Heart right ventricle (tissue), 16 donors: ENCODE measurements at regions of chr3 and their contacts with region 1.

Region 1: GRCh38 chr3:138915503-138916498 is 31.1 kb downstream of the FOXL2 start:
- DNase-seq: peak; percentile 92 to 96
- ATAC-seq: peak; percentile 96 to 99 (median 98)
- H3K4me3 ChIP-seq: peak overlapping the region; percentile 55 to 92 (median 81)
- H3K27ac ChIP-seq: peak overlapping the region; percentile 92 to 99 (median 96)
- H3K4me1 ChIP-seq: peaks cover 0 to 18% (median 7%) of the 10 kb centered on the region in 9 donors
- H3K27me3 ChIP-seq: no peaks in the 10 kb centered on the region
- CTCF ChIP-seq: peak; percentile 81 to 98 (median 88)

Region 2: GRCh38 chr3:137807998-137808397 is 1107.8 kb before region 1 on chr3:
- intact Hi-C with region 1: no loop called
- DNase-seq: no peak
- ATAC-seq: no peak
- H3K4me3 ChIP-seq: no peak overlapping the region
- H3K27ac ChIP-seq: no peak overlapping the region
- H3K4me1 ChIP-seq: no peaks in the 10 kb centered on the region
- H3K27me3 ChIP-seq: peaks cover 0 to 22% (median under 1%) of the 10 kb centered on the region in 7 donors
- CTCF ChIP-seq: no peak

Region 3: DNA sequence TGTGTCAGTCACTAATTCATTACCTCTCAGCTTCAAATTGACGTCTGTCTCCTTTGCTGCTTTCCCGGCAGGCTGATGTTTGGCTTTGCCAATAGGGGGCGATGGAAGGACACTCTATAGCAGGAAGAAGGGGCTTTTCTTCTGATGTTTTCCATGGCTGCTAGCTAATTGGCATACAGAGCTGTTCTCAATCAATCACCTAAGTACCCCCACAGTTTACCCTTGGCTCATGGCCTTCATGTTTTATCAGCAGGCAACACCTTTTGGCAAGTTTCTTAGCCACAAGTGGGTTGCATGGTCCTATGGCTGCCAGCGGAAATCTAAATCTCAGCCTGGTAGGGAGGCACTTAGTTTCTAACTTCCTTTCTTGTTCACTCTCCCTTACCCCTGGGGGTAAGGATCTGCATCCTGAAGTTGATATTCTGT is 436.4 kb before region 1 on chr3:
- intact Hi-C with region 1: loop called in 2 of 10 experiments (anchors 5 to 10 kb)
- DNase-seq: no peak
- ATAC-seq: peak in 3 of 8 donors; percentile 14 to 66 (median 58)
- H3K4me3 ChIP-seq: no peak overlapping the region
- H3K27ac ChIP-seq: no peak overlapping the region
- H3K4me1 ChIP-seq: peaks cover 0 to 11% (median 0%) of the 10 kb centered on the region in 9 donors
- H3K27me3 ChIP-seq: no peaks in the 10 kb centered on the region
- CTCF ChIP-seq: peak in 8 of 9 donors; percentile 16 to 67 (median 62)

Region 4: DNA sequence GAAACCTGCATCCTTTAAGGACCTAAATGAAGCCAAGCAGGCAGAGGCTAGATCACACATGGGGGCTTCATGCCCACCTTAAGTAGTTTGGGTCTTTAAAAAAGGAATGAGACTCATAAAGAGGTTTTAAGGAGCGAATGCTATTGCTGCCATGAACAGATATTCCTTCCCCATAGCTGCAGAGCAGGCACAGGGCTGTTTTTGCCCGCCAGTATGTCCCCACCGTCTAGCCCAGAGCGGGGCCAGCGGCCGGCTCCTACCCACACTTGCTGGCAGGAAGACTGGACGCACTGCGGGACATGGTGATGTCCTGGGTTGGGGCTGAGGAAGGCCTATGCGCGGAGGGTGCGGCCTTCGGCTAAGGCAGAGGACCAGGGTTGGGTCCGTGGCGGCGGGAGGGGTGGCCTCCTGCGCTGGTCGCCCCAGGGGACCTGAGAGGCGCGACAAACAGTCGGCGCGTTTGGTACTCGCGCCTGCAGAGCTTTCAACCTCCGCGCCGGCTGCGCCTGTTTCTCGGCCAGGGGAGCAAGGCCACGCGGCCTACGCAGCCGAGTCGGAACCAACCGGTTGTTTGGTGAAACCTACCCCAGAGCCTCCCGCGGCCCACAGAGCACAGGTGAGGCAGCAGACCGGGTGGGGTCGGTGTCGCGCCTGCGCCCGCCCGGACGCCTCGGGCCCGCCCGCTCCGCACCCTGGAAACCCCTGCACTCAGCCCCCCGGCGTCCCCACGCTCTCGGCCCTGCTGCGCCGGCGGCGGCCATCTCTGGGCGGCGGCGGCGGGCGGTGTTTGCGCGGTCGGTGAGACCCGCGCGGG is 307.3 kb before region 1 on chr3 and contains the start of gene FAIM:
- intact Hi-C with region 1: loop called in 3 of 10 experiments (anchors 5 kb)
- DNase-seq: peak; percentile 59 to 75
- ATAC-seq: peak; percentile 82 to 93 (median 86)
- H3K4me3 ChIP-seq: peak within 1 kb of the TSS; percentile 33 to 95 (median 78)
- H3K27ac ChIP-seq: peak within 1 kb of the TSS; percentile 86 to 99 (median 96)
- H3K4me1 ChIP-seq: peaks cover 3 to 15% (median 12%) of the 10 kb centered on the region in 9 donors
- H3K27me3 ChIP-seq: no peaks in the 10 kb centered on the region
- CTCF ChIP-seq: no peak
- total RNA-seq, gene FAIM: 1.5 to 3.6 (median 2.7) TPM

Region 5: GRCh38 chr3:138705675-138706074 is 210.1 kb before region 1 on chr3:
- intact Hi-C with region 1: loop called in 4 of 10 experiments (anchors 2 to 5 kb)
- DNase-seq: no peak
- ATAC-seq: no peak
- H3K4me3 ChIP-seq: no peak overlapping the region
- H3K27ac ChIP-seq: no peak overlapping the region
- H3K4me1 ChIP-seq: no peaks in the 10 kb centered on the region
- H3K27me3 ChIP-seq: no peaks in the 10 kb centered on the region
- CTCF ChIP-seq: no peak

Region 6: DNA sequence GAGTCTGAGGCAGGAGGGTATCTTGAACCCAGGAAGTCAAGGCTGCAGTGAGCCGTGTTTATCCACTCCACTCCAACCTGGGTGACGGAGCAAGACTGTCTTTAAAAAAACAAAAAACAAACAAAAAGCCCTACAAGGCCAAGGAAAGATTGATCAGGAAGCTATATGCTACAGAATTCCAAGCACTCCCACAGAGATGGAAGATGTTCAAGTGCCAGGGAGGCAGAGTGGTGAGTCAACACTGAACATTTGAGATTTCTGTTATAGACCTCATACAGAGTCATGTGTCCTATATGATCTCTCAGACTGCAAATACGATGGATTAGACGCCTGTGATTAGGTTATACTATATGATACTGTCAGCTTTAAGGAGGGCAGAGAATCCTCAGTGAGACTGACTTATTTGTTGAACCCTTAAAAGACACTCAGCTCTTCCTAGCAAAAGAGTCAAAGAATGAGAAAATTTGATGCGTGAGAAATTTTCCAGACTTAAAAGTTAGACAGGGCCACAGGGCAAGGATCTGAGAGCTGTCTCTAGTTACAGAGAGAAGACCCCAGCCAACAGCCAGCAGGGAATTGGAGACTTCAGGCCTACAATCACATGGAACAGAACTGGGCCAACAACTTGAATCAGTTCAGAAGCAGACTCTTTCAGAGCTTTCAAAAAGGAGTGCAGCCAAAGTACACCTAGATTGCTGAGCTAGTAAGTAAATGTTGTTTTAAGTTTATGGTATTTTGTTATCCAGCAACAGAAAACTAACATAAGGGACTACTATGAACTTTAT is 188.7 kb before region 1 on chr3:
- intact Hi-C with region 1: no loop called
- DNase-seq: no peak
- ATAC-seq: no peak
- H3K4me3 ChIP-seq: no peak overlapping the region
- H3K27ac ChIP-seq: no peak overlapping the region
- H3K4me1 ChIP-seq: peaks cover 0 to 18% (median 11%) of the 10 kb centered on the region in 9 donors
- H3K27me3 ChIP-seq: no peaks in the 10 kb centered on the region
- CTCF ChIP-seq: no peak

Region 7: GRCh38 chr3:138834359-138835212 is 81.2 kb before region 1 on chr3 and contains the start of gene PIK3CB:
- intact Hi-C with region 1: loop called in 9 of 10 experiments (anchors 1 to 10 kb)
- DNase-seq: peak; percentile 91 to 94
- ATAC-seq: peak; percentile 97 to 100 (median 98)
- H3K4me3 ChIP-seq: peak within 1 kb of the TSS; percentile 70 to 99 (median 88)
- H3K27ac ChIP-seq: peak within 1 kb of the TSS; percentile 81 to 96 (median 94)
- H3K4me1 ChIP-seq: peaks cover 5 to 23% (median 14%) of the 10 kb centered on the region in 9 donors
- H3K27me3 ChIP-seq: no peaks in the 10 kb centered on the region
- CTCF ChIP-seq: peak in 6 of 9 donors; percentile 9 to 57 (median 44)
- total RNA-seq, gene PIK3CB: 26.2 to 45.7 (median 29.8) TPM

Region 8: GRCh38 chr3:138854940-138855339 is 60.9 kb before region 1 on chr3:
- intact Hi-C with region 1: no loop called
- DNase-seq: no peak
- ATAC-seq: no peak
- H3K4me3 ChIP-seq: no peak overlapping the region
- H3K27ac ChIP-seq: peak overlapping the region in 2 of 10 donors; percentile 27 to 49
- H3K4me1 ChIP-seq: peaks cover 0 to 14% (median 8%) of the 10 kb centered on the region in 9 donors
- H3K27me3 ChIP-seq: no peaks in the 10 kb centered on the region
- CTCF ChIP-seq: no peak

Region 9: DNA sequence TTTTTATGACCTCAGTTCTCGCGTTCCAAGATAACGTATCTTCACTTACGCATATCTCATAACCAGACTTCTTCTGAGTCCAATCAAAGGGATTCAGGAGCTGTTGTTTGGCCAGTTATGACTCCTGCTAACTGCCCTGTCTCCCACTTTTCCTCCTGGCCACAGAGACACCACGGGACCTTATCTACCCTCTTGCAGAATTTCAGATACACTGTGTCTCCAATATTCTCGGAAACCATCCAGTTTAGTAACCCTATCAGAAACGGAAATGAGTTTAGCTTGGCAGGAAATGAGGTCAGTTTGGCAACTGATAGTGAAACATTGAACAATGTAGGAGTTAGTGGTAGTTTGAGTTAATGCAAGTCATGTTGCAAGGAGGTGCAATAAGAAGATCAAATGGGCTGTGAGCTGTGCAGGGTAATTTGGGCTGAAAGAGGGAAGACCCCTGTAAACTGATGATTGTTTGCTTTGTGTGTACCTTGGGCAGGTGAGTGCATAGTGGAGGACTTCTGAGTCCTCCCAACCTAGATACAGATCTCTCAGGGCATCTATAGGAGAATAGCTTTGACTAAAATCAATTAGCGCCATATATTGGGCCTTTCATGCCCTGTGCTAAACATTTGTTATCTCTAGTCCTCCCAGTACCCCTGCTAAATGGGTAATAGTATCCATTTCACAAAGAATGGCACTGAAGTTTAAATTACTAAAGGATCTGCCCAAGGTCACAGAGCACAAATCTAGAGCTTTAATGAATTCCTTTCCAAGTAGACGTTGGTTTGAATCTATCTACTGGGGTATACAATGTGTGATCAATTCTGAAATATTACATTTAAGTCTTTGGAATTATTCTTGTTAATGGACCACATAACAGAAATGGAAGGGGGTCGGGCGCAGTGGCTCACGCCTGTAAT is 39.8 kb before region 1 on chr3:
- intact Hi-C with region 1: no loop called
- DNase-seq: no peak
- ATAC-seq: peak in 7 of 8 donors; percentile 70 to 95 (median 83)
- H3K4me3 ChIP-seq: peak overlapping the region in 2 of 10 donors; percentile 10 to 13
- H3K27ac ChIP-seq: peak overlapping the region in 6 of 10 donors; percentile 28 to 83 (median 74)
- H3K4me1 ChIP-seq: peaks cover 0 to 19% (median 0%) of the 10 kb centered on the region in 9 donors
- H3K27me3 ChIP-seq: no peaks in the 10 kb centered on the region
- CTCF ChIP-seq: no peak